Calu3 (cell line): ENCODE measurements at regions of chr7 and their contacts with region 1.

Region 1: GRCh38 chr7:47600199-47601118 is 18.5 kb upstream of the TNS3 start:
- DNase-seq: peak; percentile 69
- H3K4me3 Mint-ChIP-seq: peak overlapping the region; percentile 35
- H3K27ac Mint-ChIP-seq: peak overlapping the region; percentile 98
- H3K4me1 Mint-ChIP-seq: peaks cover 63% of the 10 kb centered on the region
- H3K27me3 Mint-ChIP-seq: no peaks in the 10 kb centered on the region
- CTCF ChIP-seq: no peak

Region 2: DNA sequence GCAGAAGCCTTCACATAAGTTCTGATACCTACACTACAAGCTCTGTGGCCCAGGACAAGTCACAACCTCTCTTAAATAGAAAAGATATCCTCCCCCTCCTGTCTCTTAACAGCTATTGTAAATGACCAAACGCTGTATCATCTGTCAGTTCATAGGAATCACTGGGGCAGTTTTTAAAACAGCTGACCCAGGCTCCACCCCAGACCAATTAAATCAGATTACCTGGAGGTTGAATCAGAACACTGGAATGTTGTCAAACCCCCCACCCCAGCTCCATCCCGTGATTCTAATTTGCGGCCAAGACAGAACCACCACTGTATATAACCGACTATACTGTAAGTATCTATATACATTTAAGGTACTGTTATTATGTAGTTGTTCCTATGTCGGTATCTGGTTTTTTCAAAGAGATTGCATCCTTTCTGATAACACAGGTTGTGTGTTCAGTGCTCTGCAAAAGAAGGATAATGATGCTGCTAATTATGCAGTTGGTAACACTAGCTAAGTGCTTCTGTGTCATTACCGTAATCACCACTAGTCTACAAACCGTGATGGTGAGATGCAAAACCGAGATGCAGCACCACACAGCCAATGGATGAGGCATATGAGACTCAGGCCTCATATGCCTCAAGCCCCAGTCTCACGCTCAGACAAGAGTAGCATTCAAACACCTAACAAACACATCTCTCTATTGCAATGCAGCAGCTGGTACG is 66.0 kb before region 1 on chr7:
- CTCF ChIA-PET with region 1: interaction called, 6 read pairs
- intact Hi-C with region 1: loop called (anchors 2 kb)
- DNase-seq: peak; percentile 84
- H3K4me3 Mint-ChIP-seq: no peak overlapping the region
- H3K27ac Mint-ChIP-seq: peak overlapping the region; percentile 42
- H3K4me1 Mint-ChIP-seq: peaks cover 53% of the 10 kb centered on the region
- H3K27me3 Mint-ChIP-seq: no peaks in the 10 kb centered on the region
- CTCF ChIP-seq: peak; percentile 39

Region 3: DNA sequence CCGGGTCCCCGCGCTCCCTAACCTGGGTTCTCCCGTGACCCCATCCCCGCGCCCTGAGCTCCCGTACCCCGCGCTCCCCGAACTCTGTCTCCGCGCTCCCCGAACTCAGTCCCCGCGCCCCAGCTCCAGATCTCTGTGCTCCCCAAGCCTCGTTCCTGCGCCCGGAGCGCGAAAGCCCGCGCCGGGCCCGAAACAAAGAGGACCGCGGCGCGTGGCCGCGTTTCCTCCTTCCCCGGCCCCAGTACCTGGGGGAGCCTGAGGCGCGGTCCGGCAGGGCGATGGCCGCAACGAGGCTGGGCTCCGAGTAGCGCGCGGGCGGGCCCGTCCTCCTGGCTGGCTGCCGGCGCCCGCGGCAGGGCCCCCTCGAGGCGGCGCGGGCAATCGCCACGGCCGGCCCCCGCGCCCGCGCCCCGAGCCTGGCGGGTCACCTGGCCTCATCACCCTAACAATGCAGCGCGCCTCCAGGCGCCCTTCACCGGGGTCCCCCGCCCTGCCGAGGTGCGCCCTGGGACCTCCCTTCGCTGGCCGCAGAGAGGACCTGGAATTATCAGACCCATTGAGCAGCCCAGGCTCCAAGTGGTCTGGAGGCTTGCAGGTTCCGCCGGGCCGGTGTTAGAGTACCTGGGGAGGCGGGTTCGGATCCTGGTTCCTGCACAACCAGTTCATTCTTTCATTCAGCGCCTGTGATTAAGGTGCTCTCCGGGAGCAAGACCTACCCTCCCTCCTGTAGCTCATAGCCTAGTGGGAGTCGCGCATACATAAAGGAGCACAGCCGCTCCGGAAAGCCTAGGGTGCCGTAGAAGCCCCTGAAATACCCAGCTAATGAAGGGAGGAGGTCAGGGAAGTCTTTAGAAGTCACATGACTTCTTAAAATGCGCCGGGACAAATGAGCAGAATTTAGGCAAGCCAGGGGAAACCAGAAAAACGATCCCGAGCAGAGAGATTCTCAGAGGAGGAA is 18.4 kb before region 1 on chr7 and contains the start of gene TNS3:
- CTCF ChIA-PET with region 1: interaction called, 11 read pairs
- intact Hi-C with region 1: loop called (anchors 2 kb)
- DNase-seq: peak; percentile 86
- H3K4me3 Mint-ChIP-seq: peak within 1 kb of the TSS; percentile 100
- H3K27ac Mint-ChIP-seq: peak within 1 kb of the TSS; percentile 88
- H3K4me1 Mint-ChIP-seq: peaks cover 55% of the 10 kb centered on the region
- H3K27me3 Mint-ChIP-seq: no peaks in the 10 kb centered on the region
- CTCF ChIP-seq: peak; percentile 36
- total RNA-seq, gene TNS3: 102 and 135 TPM in 2 replicates

Region 4: DNA sequence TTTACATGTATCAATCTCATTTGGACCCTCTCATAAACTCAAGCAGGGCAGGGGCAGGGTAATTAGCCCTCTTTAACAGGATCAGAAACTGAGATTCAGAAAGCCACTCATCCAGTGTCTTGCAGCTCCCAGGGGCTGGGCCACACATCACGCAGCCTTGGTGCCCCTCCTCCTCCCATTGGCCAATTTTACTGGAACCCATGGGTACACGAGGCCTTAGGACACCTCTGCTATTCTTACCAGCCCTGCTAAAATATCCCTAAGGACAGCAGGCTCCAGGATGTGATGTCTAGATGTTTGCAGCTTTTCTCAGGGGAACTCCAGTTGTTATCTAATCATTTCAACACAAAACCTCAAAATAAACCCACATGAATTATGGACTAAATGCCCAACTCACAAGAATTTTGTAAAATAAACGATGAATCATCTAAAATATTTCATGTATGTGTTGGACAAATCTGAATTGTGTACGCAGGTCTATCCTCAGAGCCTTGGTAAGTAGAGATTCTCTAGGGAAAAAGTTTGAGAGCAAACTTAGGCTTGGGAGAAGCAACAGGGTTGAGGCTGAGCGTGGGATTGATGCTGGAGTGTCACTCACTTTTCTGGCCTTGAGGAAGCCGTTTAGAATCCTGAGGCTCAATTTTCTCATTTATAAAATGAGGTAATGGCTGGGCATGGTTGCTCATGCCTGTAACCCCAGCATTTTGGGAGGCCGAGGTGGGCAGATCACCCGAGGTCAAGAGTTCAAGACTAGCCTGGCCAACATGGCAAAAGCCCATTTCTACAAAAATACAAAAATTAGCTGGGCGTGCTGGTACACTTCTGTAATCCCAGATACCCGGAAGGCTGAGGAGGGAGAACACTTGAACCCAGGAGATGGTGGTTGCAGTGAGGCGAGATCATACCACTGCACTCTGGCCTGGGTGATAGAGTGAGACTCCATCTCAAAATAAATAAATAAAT is 51.2 kb after region 1 on chr7:
- CTCF ChIA-PET with region 1: no interaction called
- intact Hi-C with region 1: loop called (anchors 2 kb)
- DNase-seq: peak; percentile 30
- H3K4me3 Mint-ChIP-seq: no peak overlapping the region
- H3K27ac Mint-ChIP-seq: no peak overlapping the region
- H3K4me1 Mint-ChIP-seq: peaks cover 25% of the 10 kb centered on the region
- H3K27me3 Mint-ChIP-seq: no peaks in the 10 kb centered on the region
- CTCF ChIP-seq: no peak